RWPE1 (cell line): ENCODE measurements at regions of chr2 and their contacts with region 1.

Region 1: GRCh38 chr2:219119422-219120043 is 41.1 kb downstream of the NHEJ1 start:
- DNase-seq: peak; percentile 54
- H3K27ac ChIP-seq: no peak overlapping the region
- CTCF ChIP-seq: peak; percentile 77

Region 2: DNA sequence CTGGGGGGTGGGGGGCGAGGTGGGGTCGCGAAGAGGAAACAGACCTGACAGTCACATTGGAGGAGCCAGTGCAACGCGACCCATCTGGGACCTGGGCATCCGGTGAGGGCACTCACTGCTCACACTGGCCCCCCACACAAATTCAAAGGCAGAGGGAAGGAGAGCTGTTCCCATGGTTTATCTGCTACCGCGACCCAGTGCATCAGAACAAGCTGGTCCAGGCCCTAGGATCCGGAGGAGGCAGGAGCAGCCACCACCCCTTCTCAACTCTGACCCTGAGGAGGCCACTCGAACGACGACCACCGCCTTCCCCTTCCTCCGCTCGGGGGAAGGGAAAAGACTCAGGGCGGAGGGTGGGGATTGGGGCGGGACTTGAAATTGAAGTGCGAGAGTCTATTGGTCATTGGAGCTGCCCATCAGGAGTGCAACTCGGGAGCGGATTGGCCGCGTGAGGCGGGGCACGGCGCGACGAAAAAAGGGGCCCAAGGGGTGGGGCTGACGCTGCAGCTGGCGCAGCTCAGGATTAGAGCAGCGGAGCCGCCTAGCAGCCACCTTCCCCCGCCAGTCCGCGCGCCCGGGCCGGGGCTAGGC is 160.3 kb before region 1 on chr2 and contains the start of gene CDK5R2:
- CTCF ChIA-PET with region 1: no interaction called
- POLR2A ChIA-PET with region 1: no interaction called
- DNase-seq: peak; percentile 100
- H3K27ac ChIP-seq: no peak within 1 kb of the TSS
- CTCF ChIP-seq: no peak

Region 3: DNA sequence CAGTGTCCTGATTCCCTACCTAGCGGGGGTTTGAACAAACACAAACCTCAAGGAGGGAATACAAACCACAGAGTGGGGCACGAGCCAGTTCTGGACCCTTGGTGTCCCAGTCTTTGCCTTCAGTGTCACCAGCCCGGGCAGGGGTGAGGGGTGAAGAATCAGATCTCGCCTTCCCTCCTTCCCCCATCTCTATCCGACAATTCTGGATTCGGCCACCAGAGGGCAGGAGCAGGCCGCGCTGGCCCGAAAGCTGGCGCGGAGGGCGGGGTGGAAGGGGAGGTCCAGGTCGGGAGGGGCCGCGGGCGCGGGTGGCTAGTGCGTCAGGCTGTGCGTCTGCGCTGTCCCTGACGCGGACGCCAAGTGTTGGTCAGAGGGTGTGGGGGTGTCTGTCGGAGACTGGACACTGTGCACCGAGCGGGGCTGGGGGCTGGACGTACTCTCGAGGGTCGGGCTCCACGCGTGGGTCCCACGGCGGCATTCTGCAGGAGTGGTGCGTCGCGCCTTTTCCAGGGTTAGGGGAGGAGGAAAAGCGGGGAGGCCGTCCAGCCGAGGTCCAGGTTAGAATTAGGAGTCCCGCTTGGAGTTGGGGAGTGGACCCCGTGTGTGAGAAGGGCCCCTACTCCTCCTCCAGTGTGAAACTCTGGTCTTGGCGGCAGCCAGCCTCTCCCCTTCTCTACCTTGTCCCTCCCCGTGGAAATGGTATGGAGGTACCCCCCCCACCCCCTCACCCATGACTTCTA is 123.4 kb before region 1 on chr2:
- CTCF ChIA-PET with region 1: interaction called, 13 read pairs
- POLR2A ChIA-PET with region 1: no interaction called
- DNase-seq: peak; percentile 90
- H3K27ac ChIP-seq: no peak overlapping the region
- CTCF ChIP-seq: peak; percentile 90

Region 4: GRCh38 chr2:219010162-219010756 is 109.3 kb before region 1 on chr2:
- CTCF ChIA-PET with region 1: no interaction called
- POLR2A ChIA-PET with region 1: no interaction called
- DNase-seq: peak; percentile 60
- H3K27ac ChIP-seq: no peak overlapping the region
- CTCF ChIP-seq: peak; percentile 36